Body of pancreas (tissue), 4 donors: ENCODE measurements at regions of chr12 and their contacts with region 1.

Region 1: DNA sequence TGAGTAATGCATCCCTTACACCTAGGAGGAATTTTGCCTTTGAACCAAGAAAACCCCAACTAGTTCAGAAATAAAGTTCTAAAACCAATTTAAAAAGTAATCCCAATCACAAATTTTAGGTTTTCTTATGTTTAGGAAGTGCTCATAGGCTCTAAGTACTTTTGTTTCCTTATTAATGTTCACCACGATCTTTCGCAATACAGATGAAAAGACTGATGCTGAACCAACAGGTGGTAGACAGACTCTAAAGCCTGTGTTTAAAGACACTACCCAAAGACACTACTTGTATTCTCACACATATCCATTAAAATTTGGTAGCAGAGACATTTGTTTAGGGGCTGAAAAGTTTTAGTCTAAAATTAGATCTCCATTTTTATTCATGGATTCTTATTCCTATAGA is 10.6 kb upstream of the PHLDA1 start:
- DNase-seq: no peak
- ATAC-seq: no peak
- H3K4me3 ChIP-seq: no peak overlapping the region
- H3K27ac ChIP-seq: no peak overlapping the region
- H3K4me1 ChIP-seq: peaks cover 4% of the 10 kb centered on the region
- H3K27me3 ChIP-seq: no peaks in the 10 kb centered on the region
- CTCF ChIP-seq: no peak
- POLR2A ChIP-seq: no peak

Region 2: GRCh38 chr12:75533239-75533638 is 508.9 kb before region 1 on chr12:
- intact Hi-C with region 1: loop called (anchors 10 kb)
- DNase-seq: no peak
- ATAC-seq: no peak
- H3K4me3 ChIP-seq: no peak overlapping the region
- H3K27ac ChIP-seq: no peak overlapping the region
- H3K4me1 ChIP-seq: no peaks in the 10 kb centered on the region
- H3K27me3 ChIP-seq: no peaks in the 10 kb centered on the region
- CTCF ChIP-seq: no peak
- POLR2A ChIP-seq: no peak

Region 3: DNA sequence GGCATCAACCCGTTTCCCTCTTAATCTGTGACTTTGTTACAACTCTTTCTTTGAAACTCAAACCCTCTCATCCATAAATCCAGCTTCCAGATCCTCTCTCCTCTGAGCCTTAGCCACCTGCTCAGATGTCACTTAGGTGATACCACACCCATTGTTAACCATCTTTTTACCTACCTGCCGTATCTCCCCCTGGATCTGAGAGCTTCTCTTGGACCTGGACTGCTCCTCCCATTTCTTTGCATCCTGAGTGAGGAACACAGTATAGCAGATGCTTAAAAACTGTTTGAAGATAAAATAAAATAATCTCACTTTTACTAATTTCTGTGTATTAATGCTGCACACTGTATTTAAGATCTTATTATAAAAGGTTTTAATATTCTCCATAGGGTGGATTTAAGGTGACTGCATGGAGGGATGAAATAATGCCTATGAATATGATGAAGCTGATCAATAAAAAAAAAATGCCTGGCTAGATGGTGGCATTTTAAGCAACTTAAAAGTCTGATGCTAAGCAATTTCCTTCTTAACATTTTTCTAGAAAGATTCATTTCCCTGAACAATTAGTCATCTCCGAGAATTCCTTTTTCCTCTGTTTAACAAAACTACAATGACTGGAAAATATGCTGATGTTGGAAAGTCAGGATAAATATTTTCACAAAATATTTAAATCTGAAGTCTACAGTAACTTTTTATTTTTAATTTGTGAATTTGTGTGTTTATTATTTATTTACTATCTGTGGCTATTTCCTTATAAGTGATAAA is 81.5 kb after region 1 on chr12:
- intact Hi-C with region 1: no loop called
- DNase-seq: no peak
- ATAC-seq: no peak
- H3K4me3 ChIP-seq: no peak overlapping the region
- H3K27ac ChIP-seq: no peak overlapping the region
- H3K4me1 ChIP-seq: no peaks in the 10 kb centered on the region
- H3K27me3 ChIP-seq: no peaks in the 10 kb centered on the region
- CTCF ChIP-seq: no peak
- POLR2A ChIP-seq: no peak